K562 (cell line): ENCODE measurements at regions of chr11 and their contacts with region 1.

Region 1: DNA sequence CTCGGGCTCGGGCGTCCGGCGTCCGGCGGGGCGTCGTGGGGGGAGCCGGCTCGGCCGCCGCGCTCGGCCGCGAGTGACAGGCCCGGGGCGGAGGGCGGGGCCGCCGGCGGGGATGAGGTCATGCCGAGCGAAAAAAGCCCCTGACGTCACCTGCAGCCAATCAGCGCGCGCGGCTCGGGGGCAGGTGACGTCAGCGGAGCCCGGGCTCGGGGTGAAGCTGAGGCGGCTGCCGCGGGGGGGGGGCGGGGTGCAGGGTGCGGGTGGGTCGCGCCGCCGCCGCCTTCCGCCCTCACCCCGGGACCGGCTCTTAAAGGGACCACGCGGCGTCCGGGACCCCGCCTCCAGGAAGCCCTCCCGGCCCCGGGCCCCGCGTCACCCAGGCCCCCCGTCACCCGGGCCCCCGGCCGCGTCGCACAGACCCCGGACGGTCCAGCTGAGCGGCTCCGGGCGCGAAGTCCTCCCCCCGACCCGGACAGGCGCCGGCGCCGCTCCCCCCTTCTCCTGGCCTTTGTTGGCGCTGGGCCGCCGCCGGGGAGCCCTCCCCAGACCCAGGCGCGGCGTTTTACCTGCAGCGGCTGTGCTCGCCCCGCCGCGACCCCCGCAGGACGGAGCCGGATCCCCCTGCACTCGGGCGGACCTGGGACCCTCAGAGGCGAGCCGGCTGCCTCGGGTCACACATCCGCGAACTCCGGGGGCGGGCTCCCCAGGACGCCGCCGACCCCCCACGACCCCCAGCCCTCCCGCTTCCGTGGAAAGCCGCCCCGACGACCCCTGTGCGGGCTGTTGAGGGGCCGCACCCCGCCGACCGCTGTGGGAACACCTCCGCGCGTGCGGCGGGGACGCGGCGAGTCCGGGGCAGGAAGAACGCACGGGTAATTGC is at the start of gene DUSP8:
- DNase-seq: peak; percentile 93 to 99 (median 98)
- ATAC-seq: peak; percentile 83
- H3K4me3 ChIP-seq: peak within 1 kb of the TSS; percentile 51
- H3K27ac ChIP-seq: peak within 1 kb of the TSS; percentile 67; the same call in 1 of the 3 replicates
- H3K4me1 ChIP-seq: peaks cover 0 to 40% of the 10 kb centered on the region in 2 experiments; a peak in 3 of 5 replicates
- H3K27me3 ChIP-seq: peaks cover 0 to 18% of the 10 kb centered on the region in 2 experiments; a peak in 3 of 5 replicates
- CTCF ChIP-seq: no peak
- EP300 ChIP-seq: no peak
- POLR2A ChIP-seq: no peak
- RAD21 ChIP-seq: no peak
- polyA plus RNA-seq, gene DUSP8: not detected

Region 2: GRCh38 chr11:1113405-1114201 is 458.8 kb before region 1 on chr11:
- CTCF ChIA-PET with region 1: no interaction called
- POLR2A ChIA-PET with region 1: no interaction called
- in situ Hi-C with region 1: no loop called
- intact Hi-C with region 1: loop called (anchors 10 kb)
- DNase-seq: peak in 3 of 4 experiments; percentile 55 to 65 (median 56)
- ATAC-seq: peak; percentile 51; the same call in 2 of the 3 replicates
- H3K4me3 ChIP-seq: no peak overlapping the region
- H3K27ac ChIP-seq: no peak overlapping the region
- H3K4me1 ChIP-seq: peaks cover 0 to 26% of the 10 kb centered on the region in 2 experiments; a peak in 1 of 5 replicates
- H3K27me3 ChIP-seq: peaks cover 9 to 28% of the 10 kb centered on the region in 2 experiments; a peak in 4 of 5 replicates
- CTCF ChIP-seq: no peak
- EP300 ChIP-seq: no peak
- POLR2A ChIP-seq: no peak
- RAD21 ChIP-seq: no peak

Region 3: DNA sequence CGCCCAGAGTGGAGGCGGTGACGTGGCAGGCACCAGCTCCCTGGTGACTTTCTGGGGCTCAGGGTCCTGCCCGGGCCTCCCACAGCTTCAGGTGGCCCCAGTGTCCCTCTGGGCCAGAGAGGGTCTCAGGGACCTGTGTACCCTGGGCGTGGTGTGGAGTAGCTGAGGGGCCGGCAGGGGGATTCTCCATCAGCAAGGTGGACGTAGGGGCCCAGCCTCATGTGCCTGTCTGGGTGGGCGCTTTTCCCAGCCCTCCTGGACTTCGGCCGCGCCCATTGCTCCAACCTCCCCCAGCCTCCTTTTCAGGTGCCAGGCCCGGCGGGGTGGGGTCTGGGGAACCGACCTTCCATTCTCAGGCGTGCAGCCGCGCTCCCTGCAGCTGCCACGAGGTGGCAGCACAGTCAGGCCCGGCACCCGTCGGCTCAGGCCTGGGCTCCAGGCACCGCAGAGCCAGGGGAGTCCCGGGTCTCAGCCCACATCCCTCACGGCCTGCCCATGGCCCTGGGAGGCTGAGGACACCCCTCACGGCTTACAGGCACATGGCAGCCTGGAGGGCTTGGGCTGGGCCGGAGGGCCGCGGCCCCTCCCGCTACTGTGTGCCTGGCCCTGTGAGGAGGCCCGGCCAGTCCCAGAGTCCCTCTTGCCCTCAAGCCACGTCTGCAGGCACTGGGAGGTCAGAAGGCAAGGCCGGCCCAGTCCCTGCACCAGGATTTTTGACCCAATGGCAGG is 369.5 kb before region 1 on chr11:
- CTCF ChIA-PET with region 1: interaction called, 4 read pairs
- POLR2A ChIA-PET with region 1: no interaction called
- in situ Hi-C with region 1: no loop called
- intact Hi-C with region 1: loop called (anchors 5 kb)
- DNase-seq: peak; percentile 67 to 91 (median 87)
- ATAC-seq: peak; percentile 95
- H3K4me3 ChIP-seq: no peak overlapping the region
- H3K27ac ChIP-seq: no peak overlapping the region
- H3K4me1 ChIP-seq: peaks cover 0 to 78% of the 10 kb centered on the region in 2 experiments; a peak in 2 of 5 replicates
- H3K27me3 ChIP-seq: peaks cover 12 to 80% of the 10 kb centered on the region in 2 experiments; a peak in 4 of 5 replicates
- CTCF ChIP-seq: peak; percentile 81 to 89 (median 85)
- EP300 ChIP-seq: no peak
- POLR2A ChIP-seq: no peak
- RAD21 ChIP-seq: peak; percentile 61 to 86

Region 4: GRCh38 chr11:1458340-1459218 is 113.9 kb before region 1 on chr11:
- CTCF ChIA-PET with region 1: interaction called, 8 read pairs
- POLR2A ChIA-PET with region 1: no interaction called
- in situ Hi-C with region 1: no loop called
- intact Hi-C with region 1: loop called (anchors 10 kb)
- DNase-seq: peak; percentile 72 to 89 (median 87)
- ATAC-seq: peak; percentile 92
- H3K4me3 ChIP-seq: no peak overlapping the region
- H3K27ac ChIP-seq: no peak overlapping the region
- H3K4me1 ChIP-seq: peaks cover 0 to 76% of the 10 kb centered on the region in 2 experiments; a peak in 2 of 5 replicates
- H3K27me3 ChIP-seq: peaks cover 0 to 16% of the 10 kb centered on the region in 2 experiments; a peak in 2 of 5 replicates
- CTCF ChIP-seq: peak in 2 of 3 experiments; percentile 15 to 30; a peak in 3 of 6 replicates
- EP300 ChIP-seq: no peak
- POLR2A ChIP-seq: no peak
- RAD21 ChIP-seq: peak in 1 of 2 experiments; percentile 27; a peak in 1 of 4 replicates

Region 5: DNA sequence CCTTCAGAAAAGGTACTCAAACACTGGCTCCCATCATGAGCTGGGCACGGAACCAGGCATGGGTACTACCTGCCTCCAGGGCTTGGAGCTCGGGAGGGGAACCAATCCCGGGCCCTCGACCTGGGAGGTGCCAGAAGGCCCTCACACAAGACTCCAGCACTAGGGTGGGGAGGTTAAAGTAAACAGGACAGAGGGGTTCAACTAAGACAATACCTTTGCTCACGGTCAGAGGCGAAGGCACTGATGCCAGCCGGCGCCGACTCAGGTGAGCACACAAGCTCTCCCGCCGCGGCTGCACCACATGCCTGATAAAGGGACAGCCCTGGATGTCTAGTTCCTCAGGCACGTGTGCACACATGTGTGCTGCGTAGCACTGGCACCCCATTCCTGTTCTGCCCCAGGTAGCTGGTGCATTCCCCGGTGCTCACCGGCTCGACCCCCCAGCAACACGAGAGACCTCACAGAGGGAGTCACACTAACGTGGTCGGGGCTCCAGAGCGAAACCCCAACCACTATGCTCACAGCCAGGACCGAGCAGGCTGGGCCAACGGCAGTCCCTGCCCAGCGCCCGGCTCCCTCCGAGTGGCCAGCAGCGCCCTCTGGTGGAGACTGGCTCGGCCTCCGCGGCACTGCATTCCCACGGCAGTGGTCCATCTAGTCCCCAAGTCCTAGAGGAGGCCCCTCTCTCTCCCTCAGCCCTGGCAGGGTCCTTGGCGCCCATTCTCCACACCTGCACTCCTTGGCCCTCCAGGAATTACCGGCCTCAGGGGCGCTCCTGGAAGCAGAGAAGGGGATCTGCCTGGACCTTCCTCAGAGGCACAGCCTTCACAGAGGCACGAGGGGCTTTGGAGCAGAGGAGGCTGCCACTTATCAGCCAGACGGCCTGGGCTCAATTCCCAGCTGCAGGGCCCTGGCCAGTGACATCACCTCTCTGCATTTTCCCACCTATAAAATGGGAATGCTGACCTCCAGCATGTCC is 57.1 kb before region 1 on chr11:
- CTCF ChIA-PET with region 1: interaction called, 5 read pairs
- POLR2A ChIA-PET with region 1: no interaction called
- in situ Hi-C with region 1: no loop called
- intact Hi-C with region 1: loop called (anchors 5 kb)
- DNase-seq: peak; percentile 74 to 82 (median 77)
- ATAC-seq: peak; percentile 93
- H3K4me3 ChIP-seq: no peak overlapping the region
- H3K27ac ChIP-seq: no peak overlapping the region
- H3K4me1 ChIP-seq: peaks cover 13 to 51% of the 10 kb centered on the region in 2 experiments
- H3K27me3 ChIP-seq: no peaks in the 10 kb centered on the region
- CTCF ChIP-seq: peak; percentile 86 to 89 (median 88)
- EP300 ChIP-seq: no peak
- POLR2A ChIP-seq: no peak
- RAD21 ChIP-seq: peak; percentile 56 to 82

Region 6: GRCh38 chr11:1546536-1547400 is 25.7 kb before region 1 on chr11:
- CTCF ChIA-PET with region 1: interaction called, 19 read pairs
- POLR2A ChIA-PET with region 1: interaction called, 4 read pairs
- in situ Hi-C with region 1: no loop called
- intact Hi-C with region 1: loop called (anchors 2 kb)
- DNase-seq: peak; percentile 63 to 90 (median 87)
- ATAC-seq: peak; percentile 87
- H3K4me3 ChIP-seq: peak overlapping the region; percentile 31
- H3K27ac ChIP-seq: no peak overlapping the region
- H3K4me1 ChIP-seq: peaks cover 0 to 51% of the 10 kb centered on the region in 2 experiments; a peak in 3 of 5 replicates
- H3K27me3 ChIP-seq: peaks cover 0 to 5% of the 10 kb centered on the region in 2 experiments; a peak in 1 of 5 replicates
- CTCF ChIP-seq: peak; percentile 65 to 83 (median 66); a peak in 5 of 6 replicates
- EP300 ChIP-seq: no peak
- POLR2A ChIP-seq: no peak
- RAD21 ChIP-seq: peak; percentile 44 to 74; a peak in 3 of 4 replicates